Activated CD4-positive, alpha-beta memory T cell treated with anti-CD3 and anti-CD28 coated beads, Interleukin-2, amount 10 ng/mL, durations not matched to agents 7 days and 5 days (primary cell): ENCODE measurements at regions of chr15 and their contacts with region 1.

Region 1: GRCh38 chr15:73873889-73874511 is 636 bp downstream of the TBC1D21 start:
- DNase-seq: peak; percentile 47
- H3K4me3 Mint-ChIP-seq: no peak overlapping the region
- H3K27ac Mint-ChIP-seq: no peak overlapping the region
- H3K4me1 Mint-ChIP-seq: no peaks in the 10 kb centered on the region
- H3K27me3 Mint-ChIP-seq: peaks cover 52% of the 10 kb centered on the region

Region 2: GRCh38 chr15:73891328-73892315 is 17.6 kb after region 1 on chr15:
- CTCF ChIA-PET with region 1: interaction called, 19 read pairs
- POLR2A ChIA-PET with region 1: no interaction called
- DNase-seq: no peak
- H3K4me3 Mint-ChIP-seq: no peak overlapping the region
- H3K27ac Mint-ChIP-seq: no peak overlapping the region
- H3K4me1 Mint-ChIP-seq: peaks cover 5% of the 10 kb centered on the region
- H3K27me3 Mint-ChIP-seq: peaks cover 30% of the 10 kb centered on the region

Region 3: GRCh38 chr15:73897441-73898261 is 23.7 kb after region 1 on chr15:
- CTCF ChIA-PET with region 1: interaction called, 19 read pairs
- POLR2A ChIA-PET with region 1: no interaction called
- DNase-seq: peak; percentile 84
- H3K4me3 Mint-ChIP-seq: no peak overlapping the region
- H3K27ac Mint-ChIP-seq: no peak overlapping the region
- H3K4me1 Mint-ChIP-seq: peaks cover 13% of the 10 kb centered on the region
- H3K27me3 Mint-ChIP-seq: peaks cover 10% of the 10 kb centered on the region

Region 4: DNA sequence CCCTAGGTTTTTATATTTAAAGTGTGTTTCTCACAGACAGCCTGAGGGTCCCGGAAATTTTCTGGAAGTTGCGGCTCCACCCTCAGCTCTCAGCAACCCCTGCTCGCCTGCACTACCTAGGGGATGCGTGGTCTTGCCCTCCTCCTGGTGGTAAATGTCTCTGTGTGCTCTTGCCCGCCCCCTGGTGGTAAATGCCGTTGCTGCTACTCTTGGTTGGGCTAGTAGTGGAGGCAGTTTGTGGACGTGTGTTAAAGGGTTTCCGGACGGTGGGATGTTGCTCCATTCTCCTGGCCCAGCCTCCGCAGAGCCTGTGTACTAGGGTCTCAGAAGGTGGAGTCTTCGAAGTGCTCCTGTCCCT is 90.7 kb after region 1 on chr15:
- CTCF ChIA-PET with region 1: interaction called, 15 read pairs
- POLR2A ChIA-PET with region 1: interaction called, 3 read pairs
- DNase-seq: peak; percentile 90
- H3K4me3 Mint-ChIP-seq: peak overlapping the region; percentile 56
- H3K27ac Mint-ChIP-seq: peak overlapping the region; percentile 60
- H3K4me1 Mint-ChIP-seq: peaks cover 38% of the 10 kb centered on the region
- H3K27me3 Mint-ChIP-seq: peaks cover 8% of the 10 kb centered on the region